ENCODE measurements at regions of chr2 and their contacts with region 1.

Region 1: DNA sequence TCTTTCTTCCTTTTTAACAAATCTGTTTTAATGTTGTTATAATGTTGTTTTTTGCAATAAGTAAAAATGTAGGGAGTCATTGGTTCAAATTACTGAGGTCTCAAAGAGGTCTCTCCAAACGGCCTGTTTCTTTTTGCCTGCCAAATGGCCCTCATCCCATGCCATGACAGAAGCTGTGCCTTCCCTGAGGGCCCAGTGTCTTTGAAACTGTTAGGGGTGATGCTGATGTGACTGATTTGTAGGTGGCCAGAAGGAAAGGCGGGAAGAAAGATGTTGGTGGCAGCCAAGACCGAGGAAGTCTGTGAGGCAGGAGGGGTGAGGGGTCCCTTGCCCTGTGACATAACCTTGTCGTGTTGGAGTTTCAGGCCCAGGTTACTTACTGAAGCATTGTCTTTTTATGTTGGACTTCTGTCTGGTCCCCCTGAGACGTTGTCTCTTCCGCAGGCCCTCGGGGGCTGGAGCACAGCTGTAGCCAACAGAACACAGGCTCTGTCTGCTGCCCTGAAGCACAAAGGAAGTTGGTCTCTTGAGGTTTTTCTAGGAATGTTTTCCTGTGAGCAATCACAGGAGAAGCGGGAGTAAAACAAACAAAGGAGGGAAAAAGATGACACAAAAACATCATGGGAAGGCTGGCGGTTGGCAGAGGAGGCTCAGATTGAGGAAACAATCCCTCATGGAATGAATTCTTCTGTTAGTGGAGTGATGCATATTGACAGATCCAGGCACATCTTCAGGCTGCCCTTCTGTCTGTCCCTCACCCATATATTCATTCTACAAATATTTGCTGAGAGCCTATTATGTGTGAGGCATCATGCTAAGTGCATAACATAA is 4.9 kb upstream of the ST3GAL5 start:
- DNase-seq: no peak
- H3K4me3 ChIP-seq: no peak overlapping the region
- H3K27ac ChIP-seq: no peak overlapping the region
- H3K4me1 ChIP-seq: peaks cover 0 to 4% of the 10 kb centered on the region in 2 donors
- H3K27me3 ChIP-seq: no peaks in the 10 kb centered on the region
- CTCF ChIP-seq: no peak
- POLR2A ChIP-seq: no peak

Region 2: DNA sequence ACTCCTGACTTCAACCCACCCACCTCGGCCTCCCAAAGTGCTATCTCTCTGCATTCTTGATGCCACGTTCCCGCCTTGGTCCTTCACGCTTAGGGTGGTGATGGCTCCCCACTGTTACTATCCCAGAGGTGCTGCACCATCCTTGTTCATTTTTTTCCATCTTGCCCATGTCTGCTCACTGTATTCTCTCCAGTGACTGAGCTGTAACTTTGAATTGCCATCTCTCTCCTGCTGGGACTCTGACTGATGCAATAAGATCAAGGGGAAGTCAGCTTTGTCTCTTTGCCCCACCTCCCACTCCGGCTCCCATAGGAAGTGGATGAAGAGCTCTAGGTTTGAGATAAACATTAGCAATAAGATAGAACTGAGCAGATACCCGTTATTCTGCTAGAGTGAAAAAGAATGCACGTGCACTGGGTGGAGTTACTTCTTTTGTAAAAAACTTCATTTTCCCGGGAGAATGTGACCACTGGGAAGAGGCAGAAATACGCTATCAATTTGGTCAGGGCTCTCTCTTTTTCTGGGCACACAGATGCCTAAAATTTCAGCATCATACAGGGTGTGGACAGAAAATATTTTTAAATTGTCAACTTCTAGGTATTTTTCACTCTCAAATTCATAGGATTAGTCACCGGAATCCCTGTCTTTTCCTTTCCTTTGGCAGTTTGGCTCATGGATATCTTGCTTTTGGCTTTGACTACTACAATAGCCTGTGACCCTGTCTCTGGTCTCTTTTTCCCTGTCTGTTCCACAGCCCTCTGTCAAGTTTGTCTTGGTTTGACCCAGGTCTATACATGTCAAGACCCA is 106.7 kb after region 1 on chr2:
- intact Hi-C with region 1: loop called (anchors 10 kb)
- DNase-seq: no peak
- H3K4me3 ChIP-seq: no peak overlapping the region
- H3K27ac ChIP-seq: peak overlapping the region; percentile 87 to 89
- H3K4me1 ChIP-seq: peaks cover 12 to 24% of the 10 kb centered on the region in 2 donors
- H3K27me3 ChIP-seq: no peaks in the 10 kb centered on the region
- CTCF ChIP-seq: no peak
- POLR2A ChIP-seq: no peak

Region 3: GRCh38 chr2:86017901-86018896 is 124.6 kb after region 1 on chr2:
- intact Hi-C with region 1: no loop called
- DNase-seq: peak; percentile 44 to 60
- H3K4me3 ChIP-seq: no peak overlapping the region
- H3K27ac ChIP-seq: no peak overlapping the region
- H3K4me1 ChIP-seq: peaks cover 0 to 8% of the 10 kb centered on the region in 2 donors
- H3K27me3 ChIP-seq: no peaks in the 10 kb centered on the region
- CTCF ChIP-seq: no peak
- POLR2A ChIP-seq: no peak